ENCODE measurements at regions of chr3 and their contacts with region 1.

Region 1: DNA sequence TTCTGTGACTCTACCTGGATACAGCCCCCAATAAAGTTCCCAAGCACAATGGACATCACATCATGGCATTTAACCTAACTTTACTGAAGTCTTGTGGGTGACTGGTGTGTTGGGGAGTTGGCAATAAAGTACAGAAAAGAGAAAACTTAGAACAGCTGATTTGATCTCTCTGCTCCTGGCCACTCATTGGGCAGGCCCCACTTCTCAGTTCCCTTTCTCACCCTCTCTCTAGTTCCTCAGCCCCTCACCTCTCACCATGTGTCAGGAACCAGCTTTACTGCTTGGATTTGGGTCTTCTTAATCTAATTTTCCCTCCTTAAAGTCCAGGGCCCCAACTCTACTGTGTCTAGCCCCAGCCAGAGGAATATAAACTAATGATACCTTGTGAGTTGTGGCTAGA is 713 bp upstream of the MUC13 start:
- DNase-seq: no peak
- ATAC-seq: peak; percentile 89
- H3K4me3 ChIP-seq: no peak overlapping the region
- H3K27ac ChIP-seq: no peak overlapping the region
- H3K4me1 ChIP-seq: no peaks in the 10 kb centered on the region
- H3K27me3 ChIP-seq: no peaks in the 10 kb centered on the region; a peak in 1 of 4 replicates
- CTCF ChIP-seq: no peak
- EP300 ChIP-seq: no peak
- POLR2A ChIP-seq: no peak
- RAD21 ChIP-seq: no peak

Region 2: DNA sequence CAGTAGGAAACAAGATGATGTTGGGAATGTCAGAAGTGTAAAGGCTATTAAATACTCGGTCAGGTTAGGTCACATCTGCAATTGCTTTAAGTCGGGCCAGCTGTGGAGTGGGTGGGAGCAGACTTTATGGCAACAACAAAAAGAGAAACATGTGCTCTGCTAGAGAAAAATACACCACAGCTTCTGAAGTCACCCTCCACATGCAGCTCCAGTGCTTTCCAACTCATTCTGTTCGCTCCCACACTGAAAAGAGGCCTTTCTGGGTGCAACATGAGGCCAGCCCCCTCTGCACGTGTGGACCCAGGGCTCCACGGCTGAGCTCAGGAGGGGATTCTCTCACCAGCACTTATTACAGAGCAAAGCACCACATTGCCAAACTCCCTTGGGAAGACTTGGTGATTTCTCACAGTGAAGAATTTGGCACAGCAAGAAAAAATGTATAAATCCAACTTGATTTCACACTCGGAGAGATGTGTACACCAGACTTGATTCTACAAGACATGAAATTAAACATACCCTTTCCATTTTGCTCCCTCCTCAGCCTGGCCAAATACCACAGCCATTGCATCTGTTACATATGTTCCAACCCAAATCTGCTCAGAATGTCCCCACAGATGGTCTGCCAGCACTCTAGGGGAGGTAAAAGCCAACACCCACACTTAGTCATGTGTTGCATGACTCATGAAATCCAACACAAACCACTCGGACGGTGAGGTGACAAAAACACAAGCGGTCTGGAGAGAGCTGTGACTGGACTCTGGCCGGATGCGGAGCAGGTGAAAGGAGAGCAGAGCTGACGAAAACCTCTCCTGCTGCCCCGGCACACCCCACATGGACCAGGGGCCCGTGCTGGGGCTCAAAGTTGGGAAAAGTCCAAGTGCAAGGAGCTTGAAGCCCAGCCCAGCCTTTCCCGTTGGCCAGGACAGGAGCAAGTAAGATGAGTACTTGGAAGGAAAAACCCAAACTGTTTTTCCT is 122.7 kb before region 1 on chr3:
- CTCF ChIA-PET with region 1: no interaction called
- POLR2A ChIA-PET with region 1: no interaction called
- RAD21 ChIA-PET with region 1: no interaction called
- SMC1A ChIA-PET with region 1: no interaction called
- in situ Hi-C with region 1: no loop called
- intact Hi-C with region 1: no loop called
- DNase-seq: no peak
- ATAC-seq: peak; percentile 90
- H3K4me3 ChIP-seq: no peak overlapping the region
- H3K27ac ChIP-seq: no peak overlapping the region
- H3K4me1 ChIP-seq: no peaks in the 10 kb centered on the region
- H3K27me3 ChIP-seq: no peaks in the 10 kb centered on the region; a peak in 2 of 4 replicates
- CTCF ChIP-seq: no peak
- EP300 ChIP-seq: no peak
- POLR2A ChIP-seq: no peak
- RAD21 ChIP-seq: no peak

Region 3: GRCh38 chr3:124964387-124964786 is 29.1 kb after region 1 on chr3:
- CTCF ChIA-PET with region 1: interaction called, 10 read pairs
- POLR2A ChIA-PET with region 1: no interaction called
- RAD21 ChIA-PET with region 1: interaction called, 4 read pairs
- SMC1A ChIA-PET with region 1: interaction called, 26 read pairs
- in situ Hi-C with region 1: no loop called
- intact Hi-C with region 1: no loop called
- DNase-seq: no peak
- ATAC-seq: peak; percentile 80
- H3K4me3 ChIP-seq: no peak overlapping the region
- H3K27ac ChIP-seq: no peak overlapping the region
- H3K4me1 ChIP-seq: no peaks in the 10 kb centered on the region
- H3K27me3 ChIP-seq: no peaks in the 10 kb centered on the region
- CTCF ChIP-seq: no peak
- EP300 ChIP-seq: no peak
- POLR2A ChIP-seq: no peak
- RAD21 ChIP-seq: no peak

Region 4: GRCh38 chr3:124986158-124987143 is 51.2 kb after region 1 on chr3:
- CTCF ChIA-PET with region 1: interaction called, 18 read pairs
- POLR2A ChIA-PET with region 1: no interaction called
- RAD21 ChIA-PET with region 1: interaction called, 7 read pairs
- SMC1A ChIA-PET with region 1: interaction called, 4 read pairs
- in situ Hi-C with region 1: no loop called
- intact Hi-C with region 1: no loop called
- DNase-seq: no peak
- ATAC-seq: no peak
- H3K4me3 ChIP-seq: no peak overlapping the region
- H3K27ac ChIP-seq: no peak overlapping the region
- H3K4me1 ChIP-seq: no peaks in the 10 kb centered on the region
- H3K27me3 ChIP-seq: no peaks in the 10 kb centered on the region
- CTCF ChIP-seq: peak in 2 of 3 experiments; percentile 15 to 20; a peak in 3 of 6 replicates
- EP300 ChIP-seq: no peak
- POLR2A ChIP-seq: no peak
- RAD21 ChIP-seq: no peak

Region 5: GRCh38 chr3:125119752-125120378 is 184.6 kb after region 1 on chr3:
- CTCF ChIA-PET with region 1: interaction called, 7 read pairs
- POLR2A ChIA-PET with region 1: interaction called, 3 read pairs
- RAD21 ChIA-PET with region 1: interaction called, 12 read pairs
- SMC1A ChIA-PET with region 1: interaction called, 18 read pairs
- in situ Hi-C with region 1: no loop called
- intact Hi-C with region 1: no loop called
- DNase-seq: peak; percentile 87
- ATAC-seq: peak; percentile 80
- H3K4me3 ChIP-seq: peak overlapping the region; percentile 60
- H3K27ac ChIP-seq: peak overlapping the region; percentile 97
- H3K4me1 ChIP-seq: peaks cover 76% of the 10 kb centered on the region
- H3K27me3 ChIP-seq: no peaks in the 10 kb centered on the region
- CTCF ChIP-seq: no peak
- EP300 ChIP-seq: peak; percentile 18 to 68; a peak in 1 of 4 replicates
- POLR2A ChIP-seq: no peak; the same call in 1 of the 2 replicates
- RAD21 ChIP-seq: no peak